ENCODE measurements at regions of chr3 and their contacts with region 1.

Region 1: DNA sequence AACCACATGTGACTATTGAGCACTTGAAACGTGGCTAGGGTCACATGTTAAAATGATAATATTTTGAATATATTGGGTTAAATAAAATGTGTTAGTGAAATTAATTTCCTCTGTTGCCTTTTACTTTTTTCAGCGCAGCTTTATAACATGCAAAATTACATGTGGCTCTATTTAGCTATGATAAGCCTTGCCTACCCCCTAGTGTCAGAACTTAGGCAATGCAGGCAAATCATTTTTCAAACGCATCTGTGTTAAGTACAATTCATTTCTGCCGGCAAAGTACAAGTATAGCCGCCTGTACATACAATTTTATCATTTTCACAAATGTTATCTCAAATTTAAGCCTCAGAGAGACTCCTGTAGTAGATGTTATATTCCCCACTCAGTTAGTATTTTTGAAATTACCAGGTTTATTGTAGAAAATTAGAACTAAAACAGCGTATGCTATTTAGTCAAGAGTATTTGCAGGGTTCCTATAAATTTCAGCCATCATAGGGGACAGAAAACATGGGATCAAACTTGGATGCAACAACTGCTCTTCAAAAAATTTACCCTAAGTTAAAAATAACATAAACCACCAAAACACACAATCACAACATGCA is 56.1 kb downstream of the TAFA4 start:
- DNase-seq: peak in 1 of 2 experiments; percentile 13
- H3K4me3 ChIP-seq: no peak overlapping the region
- H3K27ac ChIP-seq: no peak overlapping the region
- H3K4me1 ChIP-seq: no peaks in the 10 kb centered on the region
- H3K27me3 ChIP-seq: 0 out of 2 replicates have a peak, but pooled peaks cover 4% of the 10 kb centered on the region
- CTCF ChIP-seq: peak; percentile 83

Region 2: GRCh38 chr3:66938338-66938963 is 1937.8 kb before region 1 on chr3:
- CTCF ChIA-PET with region 1: no interaction called
- POLR2A ChIA-PET with region 1: no interaction called
- intact Hi-C with region 1: loop called (anchors 5 kb)
- DNase-seq: peak in 1 of 2 experiments; percentile 9
- H3K4me3 ChIP-seq: no peak overlapping the region
- H3K27ac ChIP-seq: no peak overlapping the region
- H3K4me1 ChIP-seq: no peaks in the 10 kb centered on the region
- H3K27me3 ChIP-seq: peaks cover 11% of the 10 kb centered on the region; the same call in 1 of the 2 replicates
- CTCF ChIP-seq: peak; percentile 68

Region 3: GRCh38 chr3:66971891-66972551 is 1904.2 kb before region 1 on chr3:
- CTCF ChIA-PET with region 1: no interaction called
- POLR2A ChIA-PET with region 1: no interaction called
- intact Hi-C with region 1: loop called (anchors 1 kb)
- DNase-seq: peak in 1 of 2 experiments; percentile 24
- H3K4me3 ChIP-seq: no peak overlapping the region
- H3K27ac ChIP-seq: no peak overlapping the region
- H3K4me1 ChIP-seq: no peaks in the 10 kb centered on the region
- H3K27me3 ChIP-seq: peaks cover 50% of the 10 kb centered on the region; the same call in 1 of the 2 replicates
- CTCF ChIP-seq: peak; percentile 66

Region 4: GRCh38 chr3:67113802-67114407 is 1762.3 kb before region 1 on chr3:
- CTCF ChIA-PET with region 1: interaction called, 4 read pairs
- POLR2A ChIA-PET with region 1: no interaction called
- intact Hi-C with region 1: loop called (anchors 2 kb)
- DNase-seq: peak; percentile 35 to 63
- H3K4me3 ChIP-seq: no peak overlapping the region
- H3K27ac ChIP-seq: no peak overlapping the region
- H3K4me1 ChIP-seq: no peaks in the 10 kb centered on the region
- H3K27me3 ChIP-seq: no peaks in the 10 kb centered on the region
- CTCF ChIP-seq: peak; percentile 85

Region 5: GRCh38 chr3:67384760-67385397 is 1491.3 kb before region 1 on chr3:
- CTCF ChIA-PET with region 1: no interaction called
- POLR2A ChIA-PET with region 1: no interaction called
- intact Hi-C with region 1: loop called (anchors 10 kb)
- DNase-seq: no peak
- H3K4me3 ChIP-seq: no peak overlapping the region
- H3K27ac ChIP-seq: no peak overlapping the region
- H3K4me1 ChIP-seq: no peaks in the 10 kb centered on the region
- H3K27me3 ChIP-seq: no peaks in the 10 kb centered on the region
- CTCF ChIP-seq: peak; percentile 22; the same call in 1 of the 2 replicates

Region 6: DNA sequence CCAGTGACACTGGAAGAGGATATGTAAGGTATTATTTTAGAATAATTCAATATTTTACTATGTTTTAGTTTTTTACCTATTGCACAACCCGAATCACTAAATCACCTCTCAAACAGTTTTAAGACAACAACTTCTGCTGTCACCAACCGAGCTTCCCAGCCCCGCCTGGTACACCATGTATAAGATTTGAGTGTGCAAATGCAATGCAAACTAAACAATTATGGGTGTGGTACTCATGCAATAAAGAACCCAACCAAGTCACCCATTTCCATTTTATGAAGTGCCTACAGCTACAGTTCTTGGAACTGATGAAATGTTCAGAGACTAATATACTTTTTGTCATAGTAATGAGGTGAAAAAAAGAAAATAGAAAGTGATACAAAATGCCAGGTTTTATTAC is 200.1 kb before region 1 on chr3:
- CTCF ChIA-PET with region 1: no interaction called
- POLR2A ChIA-PET with region 1: no interaction called
- intact Hi-C with region 1: no loop called
- DNase-seq: no peak
- H3K4me3 ChIP-seq: no peak overlapping the region
- H3K27ac ChIP-seq: no peak overlapping the region
- H3K4me1 ChIP-seq: no peaks in the 10 kb centered on the region
- H3K27me3 ChIP-seq: peaks cover 3% of the 10 kb centered on the region; the same call in 1 of the 2 replicates
- CTCF ChIP-seq: no peak